ENCODE measurements at regions of chr6 and their contacts with region 1.

Region 1: DNA sequence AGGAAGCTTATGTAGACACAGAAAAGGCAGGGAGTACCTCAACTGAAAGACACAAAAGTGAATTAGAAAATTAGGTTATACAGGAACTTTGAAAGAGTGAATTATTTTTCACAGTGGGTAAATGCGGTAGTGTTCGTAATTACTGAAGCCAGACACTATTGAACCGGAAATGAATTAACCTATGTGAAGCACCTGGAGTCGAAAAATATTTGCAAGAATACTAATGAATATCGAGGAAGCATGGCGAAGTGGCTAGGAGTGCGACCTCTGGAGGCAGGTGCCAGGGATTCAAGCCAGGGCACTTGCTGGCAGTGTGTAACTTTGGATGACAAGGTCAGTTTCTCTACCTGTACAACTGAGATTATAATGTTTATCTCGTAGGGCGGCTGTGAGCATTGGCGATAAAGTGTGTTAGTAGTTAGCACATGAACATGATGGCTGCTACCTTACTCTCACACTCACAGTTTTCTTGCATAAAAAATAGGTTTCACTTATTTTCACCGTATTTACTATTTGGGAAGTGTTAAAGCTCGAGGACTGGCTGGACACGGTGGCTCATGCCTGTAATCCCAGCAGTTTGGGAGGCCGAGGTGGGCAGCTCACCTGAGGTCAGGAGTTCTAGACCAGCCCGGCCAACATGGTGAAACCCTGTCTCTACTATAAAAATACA is 567 bp upstream of the SLC18B1 start:
- DNase-seq: peak; percentile 80
- ATAC-seq: peak; percentile 88
- H3K4me3 Mint-ChIP-seq: no peak overlapping the region
- H3K27ac Mint-ChIP-seq: no peak overlapping the region
- H3K4me1 Mint-ChIP-seq: peaks cover 14% of the 10 kb centered on the region
- H3K27me3 Mint-ChIP-seq: no peaks in the 10 kb centered on the region

Region 2: GRCh38 chr6:132669690-132670291 is 129.2 kb before region 1 on chr6:
- CTCF ChIA-PET with region 1: interaction called, 32 read pairs
- DNase-seq: no peak
- ATAC-seq: peak; percentile 78
- H3K4me3 Mint-ChIP-seq: peak overlapping the region; percentile 29
- H3K27ac Mint-ChIP-seq: no peak overlapping the region
- H3K4me1 Mint-ChIP-seq: peaks cover 21% of the 10 kb centered on the region
- H3K27me3 Mint-ChIP-seq: peaks cover 11% of the 10 kb centered on the region

Region 3: DNA sequence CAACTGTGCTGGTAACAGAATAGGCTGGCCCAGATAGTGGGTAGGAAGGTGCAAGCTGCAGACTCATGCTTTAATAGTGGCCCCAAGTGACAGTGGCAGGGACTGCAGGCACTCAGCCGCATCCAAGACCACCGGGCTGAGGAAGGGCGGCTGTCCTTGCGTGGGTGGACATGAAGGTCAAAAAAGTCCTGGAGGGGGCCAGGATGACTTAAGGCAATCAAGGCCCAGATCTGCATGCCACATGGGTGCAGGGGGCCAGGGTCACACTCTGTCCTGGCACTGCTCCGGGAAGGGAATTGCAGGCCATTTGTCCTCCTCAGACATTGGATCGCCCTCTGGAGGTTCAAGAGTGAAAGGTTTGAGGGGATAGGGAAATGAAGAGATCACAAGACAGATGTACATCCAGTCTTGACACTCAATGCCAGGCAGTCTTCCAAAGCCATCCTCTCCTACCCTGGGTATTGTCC is 30.9 kb before region 1 on chr6:
- CTCF ChIA-PET with region 1: interaction called, 10 read pairs
- DNase-seq: peak; percentile 60
- ATAC-seq: peak; percentile 75
- H3K4me3 Mint-ChIP-seq: no peak overlapping the region
- H3K27ac Mint-ChIP-seq: no peak overlapping the region
- H3K4me1 Mint-ChIP-seq: peaks cover 19% of the 10 kb centered on the region
- H3K27me3 Mint-ChIP-seq: no peaks in the 10 kb centered on the region

Region 4: DNA sequence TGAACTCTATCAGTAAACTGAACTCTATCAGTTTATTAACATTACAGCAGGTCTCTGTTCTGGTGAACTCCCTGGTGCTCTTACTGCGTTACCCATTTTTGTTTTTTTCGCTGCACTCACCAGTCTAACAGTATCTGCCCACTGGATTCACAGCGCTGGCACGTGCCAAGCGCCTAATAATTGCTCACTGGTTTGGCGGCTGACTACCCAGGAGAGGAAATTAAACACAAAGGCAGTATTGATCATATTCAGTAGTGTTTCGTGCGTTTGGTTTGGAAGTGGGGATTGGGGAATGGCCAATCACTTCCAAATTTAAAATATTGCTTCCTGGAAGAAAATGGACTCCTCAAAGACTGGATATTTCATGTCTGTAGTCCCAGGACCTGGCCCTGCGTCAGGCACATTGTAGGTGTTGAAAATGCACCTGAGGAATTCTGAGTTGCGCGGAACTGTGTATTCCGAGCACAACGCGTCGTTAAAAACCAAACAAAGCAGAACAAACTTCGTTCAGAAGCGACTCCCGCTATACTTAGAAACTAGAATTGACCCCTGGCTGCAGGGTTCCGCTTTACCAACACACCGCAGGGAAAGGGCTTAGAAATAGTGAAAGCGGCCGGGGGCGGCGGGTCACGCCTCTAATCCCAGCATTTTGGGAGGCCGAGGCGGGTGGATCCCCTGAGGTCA is 14.3 kb after region 1 on chr6:
- CTCF ChIA-PET with region 1: interaction called, 51 read pairs
- DNase-seq: peak; percentile 62
- ATAC-seq: peak; percentile 6
- H3K4me3 Mint-ChIP-seq: peak overlapping the region; percentile 97
- H3K27ac Mint-ChIP-seq: peak overlapping the region; percentile 100
- H3K4me1 Mint-ChIP-seq: peaks cover 37% of the 10 kb centered on the region
- H3K27me3 Mint-ChIP-seq: peaks cover 12% of the 10 kb centered on the region